Activated CD4-positive, alpha-beta T cell treated with anti-CD3 and anti-CD28 coated beads, Interleukin-2, amount 10 ng/mL, durations not matched to agents 24 days and 14 days (primary cell): ENCODE measurements at regions of chrX and their contacts with region 1.

Region 1: DNA sequence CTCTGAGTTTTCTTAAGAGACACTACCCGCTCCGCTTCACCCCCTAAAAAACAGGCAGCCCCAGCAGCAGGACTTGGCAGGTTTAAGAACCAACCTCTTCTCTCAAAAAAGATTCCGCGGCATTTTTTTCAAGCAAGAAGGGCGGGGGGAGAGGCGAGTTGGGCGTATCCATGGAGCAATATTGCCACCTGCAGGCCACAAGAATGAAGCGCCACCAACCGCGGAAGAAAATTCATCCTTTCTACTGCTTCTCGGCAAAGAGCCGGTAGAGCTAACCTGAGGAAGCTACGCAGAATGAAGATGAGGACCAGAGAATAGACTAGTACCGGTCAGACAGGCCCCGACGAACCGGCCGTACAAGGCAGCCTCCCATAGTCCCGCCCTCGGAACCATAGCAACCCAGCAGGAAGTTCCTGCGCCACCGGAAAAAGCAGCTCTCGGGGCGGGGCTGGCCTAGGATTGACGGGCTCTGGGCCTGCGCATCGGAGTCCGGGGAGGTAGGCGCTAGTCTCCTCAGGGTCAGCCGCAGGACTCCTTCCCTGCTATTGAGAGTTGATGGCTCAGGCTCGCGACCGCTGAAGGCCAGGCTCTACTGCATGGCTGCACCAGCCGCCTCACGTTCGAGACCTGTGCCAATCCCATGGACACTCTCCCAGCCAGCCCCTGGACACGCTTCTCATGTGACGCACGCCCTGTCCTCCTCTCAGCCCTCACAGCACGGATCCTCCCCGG is 76.9 kb downstream of the MAGED4 start:
- DNase-seq: peak; percentile 95
- H3K4me3 Mint-ChIP-seq: peak overlapping the region; percentile 97
- H3K27ac Mint-ChIP-seq: peak overlapping the region; percentile 99
- H3K4me1 Mint-ChIP-seq: peaks cover 10% of the 10 kb centered on the region
- H3K27me3 Mint-ChIP-seq: peaks cover 13% of the 10 kb centered on the region

Region 2: GRCh38 chrX:51487960-51488267 is 773.7 kb before region 1 on chrX:
- intact Hi-C with region 1: loop called (anchors 10 kb)
- DNase-seq: no peak
- H3K4me3 Mint-ChIP-seq: no peak overlapping the region
- H3K27ac Mint-ChIP-seq: no peak overlapping the region
- H3K4me1 Mint-ChIP-seq: no peaks in the 10 kb centered on the region
- H3K27me3 Mint-ChIP-seq: no peaks in the 10 kb centered on the region

Region 3: GRCh38 chrX:51892921-51893745 is 368.5 kb before region 1 on chrX and contains the start of gene MAGED1:
- intact Hi-C with region 1: loop called (anchors 1 kb)
- DNase-seq: peak; percentile 94
- H3K4me3 Mint-ChIP-seq: peak within 1 kb of the TSS; percentile 96
- H3K27ac Mint-ChIP-seq: peak within 1 kb of the TSS; percentile 93
- H3K4me1 Mint-ChIP-seq: peaks cover 18% of the 10 kb centered on the region
- H3K27me3 Mint-ChIP-seq: no peaks in the 10 kb centered on the region
- total RNA-seq, gene MAGED1: 35.5 and 41.6 TPM in 2 replicates

Region 4: GRCh38 chrX:53864591-53864990 is 1603.0 kb after region 1 on chrX:
- intact Hi-C with region 1: no loop called
- DNase-seq: no peak
- H3K4me3 Mint-ChIP-seq: no peak overlapping the region
- H3K27ac Mint-ChIP-seq: no peak overlapping the region
- H3K4me1 Mint-ChIP-seq: no peaks in the 10 kb centered on the region
- H3K27me3 Mint-ChIP-seq: no peaks in the 10 kb centered on the region